ENCODE measurements at regions of chr12 and their contacts with region 1.

Region 1: DNA sequence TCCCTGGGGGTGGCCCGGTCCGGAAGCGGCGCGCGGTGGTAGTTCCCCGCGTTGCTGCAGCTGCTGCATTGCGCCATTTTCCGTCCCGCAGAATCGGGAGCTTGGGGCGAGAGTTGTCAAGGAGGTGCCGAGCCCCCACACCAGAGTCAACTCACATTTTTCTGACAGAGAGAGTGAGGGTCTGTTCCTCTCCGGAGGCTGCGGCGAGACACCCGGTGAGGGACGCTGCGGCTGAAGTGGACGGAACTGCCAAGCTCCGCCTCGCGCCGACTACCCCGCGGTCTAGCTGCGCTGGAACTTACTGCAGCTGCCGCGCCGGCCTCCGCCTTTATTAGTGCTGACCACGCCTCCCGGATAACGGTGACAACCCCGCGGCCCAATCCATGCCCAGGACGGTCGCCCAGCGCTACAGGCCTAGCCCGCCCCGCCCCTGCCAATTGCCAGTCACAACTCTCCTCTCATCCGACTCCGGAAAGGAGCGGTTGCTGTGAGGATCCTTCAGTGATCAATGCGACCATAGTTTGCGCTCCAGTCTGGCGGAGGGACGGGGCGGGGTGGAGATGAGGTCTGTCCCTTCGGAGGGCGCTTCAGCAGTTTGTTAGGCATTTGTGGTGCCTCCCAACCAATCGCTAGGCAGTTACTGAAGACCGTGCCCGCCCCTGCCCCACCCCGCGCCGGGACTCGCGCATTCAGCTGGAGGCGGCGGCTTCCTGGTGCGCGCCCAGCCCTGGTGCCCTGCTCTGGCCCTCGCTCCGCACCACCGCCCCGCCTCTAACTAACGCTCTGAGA is at the start of gene VAMP1:
- DNase-seq: peak; percentile 97
- H3K4me3 ChIP-seq: peak within 1 kb of the TSS; percentile 77 to 92
- H3K27ac ChIP-seq: peak within 1 kb of the TSS; percentile 91 to 98
- H3K4me1 ChIP-seq: peaks cover 0 to 13% of the 10 kb centered on the region in 2 experiments; a peak in 2 of 4 replicates
- H3K27me3 ChIP-seq: no peaks in the 10 kb centered on the region
- CTCF ChIP-seq: no peak
- EP300 ChIP-seq: no peak; a peak in 1 of 4 replicates
- RAD21 ChIP-seq: no peak
- polyA plus RNA-seq, gene VAMP1: 36.8 and 48.9 TPM in 2 replicates

Region 2: DNA sequence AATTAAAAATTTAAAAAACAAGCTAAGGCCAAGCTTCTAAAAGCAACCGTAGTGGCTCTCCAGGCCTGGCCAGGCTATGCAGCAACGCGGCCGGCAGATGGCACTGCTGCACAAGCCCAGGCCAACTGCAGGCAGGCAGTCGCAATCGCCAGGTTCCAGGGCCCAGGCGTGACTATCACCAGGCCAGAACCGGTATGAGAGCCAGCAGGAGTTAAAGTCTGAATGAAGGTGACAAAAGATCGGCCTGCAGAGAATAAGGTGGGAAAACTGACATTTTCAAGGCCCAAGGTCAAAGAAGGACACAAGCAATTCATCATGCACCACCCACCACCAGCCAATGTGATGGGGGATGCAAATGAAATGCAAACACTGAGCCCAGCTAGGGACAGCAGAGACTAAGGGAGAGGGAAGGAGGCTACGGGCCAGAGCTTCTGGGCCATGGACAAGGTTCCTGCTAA is 481.9 kb before region 1 on chr12:
- CTCF ChIA-PET with region 1: interaction called, 24 read pairs
- POLR2A ChIA-PET with region 1: no interaction called
- DNase-seq: peak; percentile 85
- H3K4me3 ChIP-seq: peak overlapping the region in 1 of 2 experiments; percentile 52; a peak in 1 of 4 replicates
- H3K27ac ChIP-seq: no peak overlapping the region
- H3K4me1 ChIP-seq: peaks cover 0 to 3% of the 10 kb centered on the region in 2 experiments; a peak in 1 of 4 replicates
- H3K27me3 ChIP-seq: no peaks in the 10 kb centered on the region; the same call in 1 of the 2 replicates
- CTCF ChIP-seq: peak; percentile 97
- EP300 ChIP-seq: no peak
- RAD21 ChIP-seq: peak; percentile 94

Region 3: DNA sequence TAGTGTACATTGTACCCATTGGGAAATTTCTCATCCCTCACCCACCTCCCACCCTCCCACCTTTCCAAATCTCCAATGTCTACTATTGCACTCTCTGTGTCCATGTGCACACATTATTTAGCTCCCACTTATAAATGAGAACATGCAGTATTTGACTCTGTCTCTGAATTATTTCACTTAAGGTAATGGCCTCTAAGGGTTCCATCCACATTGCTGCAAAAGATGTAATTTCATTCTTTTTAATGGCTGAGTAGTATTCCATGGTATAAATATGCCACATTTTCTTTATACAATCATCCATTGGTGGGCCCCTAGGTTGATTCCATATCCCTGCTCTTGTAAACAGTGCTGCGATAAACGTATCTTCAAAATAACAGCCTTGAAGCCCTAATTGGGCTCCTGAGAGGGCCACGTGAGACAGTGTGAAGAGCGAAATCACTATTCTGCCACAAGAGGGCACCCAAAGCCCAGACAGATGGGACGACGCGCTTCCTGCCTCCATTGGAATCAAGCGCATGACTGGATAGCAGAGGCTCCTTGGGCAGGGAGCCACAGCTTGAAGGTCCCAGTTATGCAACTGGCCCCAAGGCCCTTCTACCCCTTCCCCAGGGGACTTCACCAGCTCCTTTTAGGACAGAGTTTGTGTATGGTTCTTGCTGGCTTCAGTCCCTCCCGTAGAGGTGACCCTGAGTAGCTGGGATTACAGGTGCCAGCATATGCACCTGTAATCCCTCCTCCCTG is 47.1 kb before region 1 on chr12:
- CTCF ChIA-PET with region 1: interaction called, 91 read pairs
- POLR2A ChIA-PET with region 1: interaction called, 7 read pairs
- DNase-seq: peak; percentile 83
- H3K4me3 ChIP-seq: no peak overlapping the region
- H3K27ac ChIP-seq: no peak overlapping the region
- H3K4me1 ChIP-seq: no peaks in the 10 kb centered on the region
- H3K27me3 ChIP-seq: no peaks in the 10 kb centered on the region
- CTCF ChIP-seq: peak; percentile 84
- EP300 ChIP-seq: no peak
- RAD21 ChIP-seq: peak; percentile 94

Region 4: DNA sequence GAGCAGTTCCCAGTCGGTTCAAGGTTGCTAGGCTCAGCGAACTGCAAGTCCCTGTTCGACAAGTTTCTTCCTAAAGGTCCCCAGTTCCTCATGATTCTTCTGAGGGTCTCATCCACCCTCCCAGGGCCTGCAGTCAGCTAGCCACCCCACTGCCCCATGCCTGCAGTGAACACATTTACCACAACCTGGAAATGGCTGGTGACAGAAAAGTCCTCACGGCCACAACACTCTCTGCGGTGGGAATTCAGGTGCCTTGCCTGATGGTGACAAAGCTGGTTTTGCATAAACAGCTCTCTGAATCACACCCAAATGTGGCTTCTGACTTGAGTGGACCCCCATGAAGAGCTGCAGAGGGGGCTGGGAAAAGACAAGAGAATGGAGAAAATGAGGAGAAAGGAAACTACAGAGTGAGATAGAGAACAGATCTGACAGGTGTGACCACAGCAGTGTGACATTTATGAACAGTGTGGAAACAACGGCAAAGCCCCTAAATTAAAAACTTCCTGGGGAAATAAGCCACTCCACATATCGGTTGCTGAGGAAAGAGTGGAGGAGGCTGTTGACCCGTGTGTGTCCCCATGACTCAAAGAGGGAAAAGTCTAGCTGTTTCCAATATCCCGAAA is 27.1 kb before region 1 on chr12:
- CTCF ChIA-PET with region 1: interaction called, 21 read pairs
- POLR2A ChIA-PET with region 1: no interaction called
- DNase-seq: no peak
- H3K4me3 ChIP-seq: no peak overlapping the region
- H3K27ac ChIP-seq: no peak overlapping the region
- H3K4me1 ChIP-seq: no peaks in the 10 kb centered on the region
- H3K27me3 ChIP-seq: no peaks in the 10 kb centered on the region
- CTCF ChIP-seq: no peak
- EP300 ChIP-seq: no peak
- RAD21 ChIP-seq: no peak

Region 5: GRCh38 chr12:6458281-6459003 is 12.1 kb before region 1 on chr12:
- CTCF ChIA-PET with region 1: interaction called, 33 read pairs
- POLR2A ChIA-PET with region 1: no interaction called
- DNase-seq: no peak
- H3K4me3 ChIP-seq: no peak overlapping the region
- H3K27ac ChIP-seq: no peak overlapping the region
- H3K4me1 ChIP-seq: no peaks in the 10 kb centered on the region; a peak in 1 of 4 replicates
- H3K27me3 ChIP-seq: no peaks in the 10 kb centered on the region
- CTCF ChIP-seq: no peak
- EP300 ChIP-seq: no peak
- RAD21 ChIP-seq: no peak

Region 6: GRCh38 chr12:6533923-6534694 is 63.5 kb after region 1 on chr12 and contains the start of gene GAPDH:
- CTCF ChIA-PET with region 1: interaction called, 15 read pairs
- POLR2A ChIA-PET with region 1: interaction called, 16 read pairs
- DNase-seq: peak; percentile 94
- H3K4me3 ChIP-seq: peak within 1 kb of the TSS; percentile 93 to 97
- H3K27ac ChIP-seq: peak within 1 kb of the TSS; percentile 96 to 98
- H3K4me1 ChIP-seq: peaks cover 15 to 34% of the 10 kb centered on the region in 2 experiments; a peak in 3 of 4 replicates
- H3K27me3 ChIP-seq: no peaks in the 10 kb centered on the region
- CTCF ChIP-seq: no peak
- EP300 ChIP-seq: peak in 1 of 2 experiments; percentile 57; a peak in 2 of 4 replicates
- RAD21 ChIP-seq: no peak
- polyA plus RNA-seq, gene GAPDH: 7,875 and 8,077 TPM in 2 replicates